ENCODE measurements at regions of chr15 and their contacts with region 1.

Region 1: GRCh38 chr15:65638681-65639089 is 16.9 kb downstream of the SLC24A1 start:
- DNase-seq: peak in 5 of 9 experiments; percentile 16 to 85 (median 32)
- ATAC-seq: peak; percentile 84
- H3K4me3 ChIP-seq: no peak overlapping the region
- H3K4me3 Mint-ChIP-seq: no peak overlapping the region
- H3K27ac ChIP-seq: no peak overlapping the region
- H3K27ac Mint-ChIP-seq: no peak overlapping the region
- H3K4me1 ChIP-seq: no peaks in the 10 kb centered on the region
- H3K4me1 Mint-ChIP-seq: peaks cover 12% of the 10 kb centered on the region
- H3K27me3 ChIP-seq: no peaks in the 10 kb centered on the region
- H3K27me3 Mint-ChIP-seq: no peaks in the 10 kb centered on the region
- CTCF ChIP-seq: peak; percentile 88

Region 2: DNA sequence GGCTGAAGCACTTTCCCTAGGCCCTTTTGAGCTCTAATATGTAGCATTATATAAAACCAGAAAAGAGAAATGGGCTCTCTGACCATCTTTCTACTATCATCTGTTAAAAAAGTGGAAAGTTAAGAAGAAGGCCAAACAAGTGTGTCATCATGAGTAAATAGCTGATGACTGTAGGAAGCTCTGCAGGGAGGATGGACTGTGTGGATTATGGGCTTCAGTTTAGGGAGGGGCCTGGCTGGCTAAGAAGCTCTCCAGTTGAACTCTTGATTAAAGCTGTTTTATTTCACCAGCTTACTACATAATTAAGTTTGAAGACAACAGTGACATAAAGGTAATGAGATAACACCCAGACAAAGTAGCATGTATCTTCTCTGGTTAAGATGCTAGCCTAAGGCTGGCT is 58.4 kb before region 1 on chr15:
- CTCF ChIA-PET with region 1: no interaction called
- POLR2A ChIA-PET with region 1: interaction called, 3 read pairs
- intact Hi-C with region 1: loop called in 1 of 2 experiments (anchors 2 kb)
- DNase-seq: no peak
- ATAC-seq: no peak
- H3K4me3 ChIP-seq: no peak overlapping the region
- H3K4me3 Mint-ChIP-seq: no peak overlapping the region
- H3K27ac ChIP-seq: no peak overlapping the region
- H3K27ac Mint-ChIP-seq: peak overlapping the region; percentile 66
- H3K4me1 ChIP-seq: peaks cover 20% of the 10 kb centered on the region
- H3K4me1 Mint-ChIP-seq: peaks cover 23% of the 10 kb centered on the region
- H3K27me3 ChIP-seq: no peaks in the 10 kb centered on the region
- H3K27me3 Mint-ChIP-seq: no peaks in the 10 kb centered on the region
- CTCF ChIP-seq: no peak

Region 3: GRCh38 chr15:65804252-65804931 is 165.7 kb after region 1 on chr15:
- CTCF ChIA-PET with region 1: no interaction called
- POLR2A ChIA-PET with region 1: no interaction called
- intact Hi-C with region 1: no loop called
- DNase-seq: no peak
- ATAC-seq: no peak
- H3K4me3 ChIP-seq: no peak overlapping the region
- H3K4me3 Mint-ChIP-seq: no peak overlapping the region
- H3K27ac ChIP-seq: peak overlapping the region in 1 of 2 experiments; percentile 47
- H3K27ac Mint-ChIP-seq: peak overlapping the region; percentile 88
- H3K4me1 ChIP-seq: peaks cover 36% of the 10 kb centered on the region
- H3K4me1 Mint-ChIP-seq: peaks cover 34% of the 10 kb centered on the region
- H3K27me3 ChIP-seq: no peaks in the 10 kb centered on the region
- H3K27me3 Mint-ChIP-seq: no peaks in the 10 kb centered on the region
- CTCF ChIP-seq: no peak

Region 4: GRCh38 chr15:65832549-65833364 is 194.1 kb after region 1 on chr15:
- CTCF ChIA-PET with region 1: interaction called, 9 read pairs
- POLR2A ChIA-PET with region 1: interaction called, 5 read pairs
- intact Hi-C with region 1: loop called in 1 of 2 experiments (anchors 1 kb)
- DNase-seq: peak; percentile 12 to 81 (median 55)
- ATAC-seq: peak; percentile 40
- H3K4me3 ChIP-seq: peak overlapping the region; percentile 2 to 18
- H3K4me3 Mint-ChIP-seq: peak overlapping the region; percentile 75
- H3K27ac ChIP-seq: peak overlapping the region; percentile 39 to 89
- H3K27ac Mint-ChIP-seq: peak overlapping the region; percentile 94
- H3K4me1 ChIP-seq: peaks cover 52% of the 10 kb centered on the region
- H3K4me1 Mint-ChIP-seq: peaks cover 57% of the 10 kb centered on the region
- H3K27me3 ChIP-seq: no peaks in the 10 kb centered on the region
- H3K27me3 Mint-ChIP-seq: no peaks in the 10 kb centered on the region
- CTCF ChIP-seq: no peak

Region 5: GRCh38 chr15:65856821-65857455 is 218.3 kb after region 1 on chr15:
- CTCF ChIA-PET with region 1: interaction called, 60 read pairs
- POLR2A ChIA-PET with region 1: interaction called, 3 read pairs
- intact Hi-C with region 1: loop called (anchors 1 kb)
- DNase-seq: peak; percentile 59 to 88 (median 84)
- ATAC-seq: peak; percentile 87
- H3K4me3 ChIP-seq: no peak overlapping the region
- H3K4me3 Mint-ChIP-seq: no peak overlapping the region
- H3K27ac ChIP-seq: no peak overlapping the region
- H3K27ac Mint-ChIP-seq: no peak overlapping the region
- H3K4me1 ChIP-seq: no peaks in the 10 kb centered on the region
- H3K4me1 Mint-ChIP-seq: peaks cover 11% of the 10 kb centered on the region
- H3K27me3 ChIP-seq: no peaks in the 10 kb centered on the region
- H3K27me3 Mint-ChIP-seq: no peaks in the 10 kb centered on the region
- CTCF ChIP-seq: peak; percentile 80

Region 6: DNA sequence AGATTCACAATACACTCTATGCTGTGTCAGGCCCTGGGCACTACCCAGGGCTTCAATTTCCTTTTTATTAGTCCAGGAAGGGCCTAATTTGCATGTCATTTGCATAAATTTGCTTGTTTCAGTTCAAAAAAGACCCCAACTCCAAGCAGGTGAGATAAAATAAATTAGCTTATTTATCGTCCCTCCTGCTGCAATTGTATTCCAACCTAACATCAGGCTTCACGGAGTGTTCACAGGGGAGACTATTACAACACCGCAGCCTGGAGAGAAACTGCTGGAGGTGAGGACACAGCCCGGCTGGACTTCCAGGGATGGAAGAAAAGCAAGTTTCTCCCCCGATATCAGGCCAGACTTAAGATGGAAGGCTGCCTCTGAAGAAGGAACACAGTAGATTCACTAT is 552.1 kb after region 1 on chr15:
- CTCF ChIA-PET with region 1: interaction called, 4 read pairs
- POLR2A ChIA-PET with region 1: no interaction called
- intact Hi-C with region 1: loop called in 1 of 2 experiments (anchors 2 kb)
- DNase-seq: no peak
- ATAC-seq: no peak
- H3K4me3 ChIP-seq: no peak overlapping the region
- H3K4me3 Mint-ChIP-seq: no peak overlapping the region
- H3K27ac ChIP-seq: no peak overlapping the region
- H3K27ac Mint-ChIP-seq: no peak overlapping the region
- H3K4me1 ChIP-seq: no peaks in the 10 kb centered on the region
- H3K4me1 Mint-ChIP-seq: no peaks in the 10 kb centered on the region
- H3K27me3 ChIP-seq: peaks cover 0 to 2% of the 10 kb centered on the region in 2 experiments
- H3K27me3 Mint-ChIP-seq: peaks cover 16% of the 10 kb centered on the region
- CTCF ChIP-seq: no peak

Region 7: DNA sequence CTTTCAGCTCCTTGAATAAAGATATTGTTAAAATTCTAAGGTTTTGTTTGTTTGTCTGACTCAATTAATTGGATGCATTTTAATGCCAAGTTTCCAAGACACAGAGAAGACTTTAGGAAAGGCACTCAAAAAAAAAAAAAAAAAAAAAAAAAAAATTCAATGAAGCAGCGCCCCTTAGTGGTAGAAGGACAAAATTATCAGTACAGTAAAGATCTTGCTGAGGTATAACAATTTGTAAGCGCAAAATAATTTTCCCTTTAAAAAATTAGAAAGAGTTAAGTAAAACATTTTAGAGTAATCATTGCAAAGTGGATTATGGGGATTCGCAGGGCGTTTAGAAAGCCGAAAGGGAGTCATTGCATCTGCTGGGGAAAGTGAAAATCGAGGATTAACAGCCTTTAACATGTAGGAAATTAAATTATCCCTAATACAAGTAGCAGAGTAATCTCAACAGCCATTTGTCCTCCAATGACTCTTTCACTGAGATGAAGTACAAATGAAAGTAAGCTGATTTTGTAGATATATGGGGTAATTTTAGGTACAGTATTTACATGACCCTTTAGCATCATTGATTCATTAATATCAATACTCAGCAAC is 648.9 kb after region 1 on chr15:
- CTCF ChIA-PET with region 1: interaction called, 8 read pairs
- POLR2A ChIA-PET with region 1: no interaction called
- intact Hi-C with region 1: loop called in 1 of 2 experiments (anchors 5 kb)
- DNase-seq: peak in 2 of 9 experiments; percentile 48 to 65
- ATAC-seq: peak; percentile 44
- H3K4me3 ChIP-seq: no peak overlapping the region
- H3K4me3 Mint-ChIP-seq: no peak overlapping the region
- H3K27ac ChIP-seq: no peak overlapping the region
- H3K27ac Mint-ChIP-seq: no peak overlapping the region
- H3K4me1 ChIP-seq: peaks cover 19% of the 10 kb centered on the region
- H3K4me1 Mint-ChIP-seq: peaks cover 23% of the 10 kb centered on the region
- H3K27me3 ChIP-seq: no peaks in the 10 kb centered on the region
- H3K27me3 Mint-ChIP-seq: no peaks in the 10 kb centered on the region
- CTCF ChIP-seq: peak; percentile 96

Region 8: GRCh38 chr15:66700802-66701421 is 1062.2 kb after region 1 on chr15:
- CTCF ChIA-PET with region 1: no interaction called
- POLR2A ChIA-PET with region 1: no interaction called
- intact Hi-C with region 1: no loop called
- DNase-seq: peak; percentile 62 to 87 (median 81)
- ATAC-seq: peak; percentile 81
- H3K4me3 ChIP-seq: peak overlapping the region; percentile 70 to 77
- H3K4me3 Mint-ChIP-seq: peak overlapping the region; percentile 94
- H3K27ac ChIP-seq: no peak overlapping the region
- H3K27ac Mint-ChIP-seq: peak overlapping the region; percentile 73
- H3K4me1 ChIP-seq: peaks cover 20% of the 10 kb centered on the region
- H3K4me1 Mint-ChIP-seq: peaks cover 21% of the 10 kb centered on the region
- H3K27me3 ChIP-seq: peaks cover 8 to 14% of the 10 kb centered on the region in 2 experiments
- H3K27me3 Mint-ChIP-seq: peaks cover 12% of the 10 kb centered on the region
- CTCF ChIP-seq: no peak

Measured in CD8-positive, alpha-beta T cell (primary cell).